Panc1 (cell line): ENCODE measurements at regions of chr10 and their contacts with region 1.

Region 1: DNA sequence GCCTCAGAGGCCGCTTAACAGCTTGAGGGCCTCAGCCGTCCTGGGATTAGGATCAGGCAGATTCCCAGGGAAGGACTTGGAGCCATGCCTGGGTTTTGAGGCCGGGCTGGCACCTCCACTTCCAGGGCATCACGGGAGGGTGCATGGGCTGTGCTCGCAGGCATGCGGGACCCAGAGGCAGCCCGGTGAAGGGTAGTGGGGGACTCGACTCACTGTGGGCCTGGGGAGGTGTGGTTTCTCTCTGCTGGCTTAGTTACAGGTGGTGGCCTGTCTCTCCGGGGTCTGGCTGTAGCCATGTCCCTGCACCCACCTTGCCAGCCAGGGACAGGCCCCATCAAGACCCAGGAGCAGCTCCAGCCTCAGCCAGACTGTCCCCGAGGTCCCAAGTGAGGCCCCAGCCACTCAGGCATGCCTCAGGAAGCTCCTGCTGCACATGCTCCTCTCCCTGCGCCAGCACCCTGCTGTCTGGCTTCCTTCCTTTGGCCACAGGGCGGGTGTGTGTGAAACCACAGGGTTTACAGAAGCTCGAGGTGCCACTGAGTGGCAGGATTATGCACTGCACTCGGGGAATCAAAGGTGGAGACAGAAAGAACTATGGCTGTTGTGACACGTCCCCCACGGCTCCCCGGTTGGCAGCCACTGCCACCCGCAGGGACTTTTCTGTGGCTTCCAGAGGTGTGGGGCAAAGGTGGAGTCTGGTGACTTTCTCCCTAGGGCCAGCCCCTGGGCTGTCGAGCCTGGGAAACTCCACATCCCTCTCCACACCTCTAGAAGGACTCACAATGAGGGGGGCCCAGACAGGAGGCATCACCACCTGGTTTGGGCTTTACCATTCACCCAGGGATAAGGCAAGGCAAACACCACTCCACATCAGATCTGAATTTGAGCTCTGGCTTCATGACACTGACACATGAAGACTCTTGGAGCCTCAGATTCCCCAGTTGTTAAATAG is 19.7 kb downstream of the GOLGA7B start:
- DNase-seq: peak; percentile 72
- ATAC-seq: peak; percentile 98
- H3K4me3 ChIP-seq: peak overlapping the region in 1 of 2 experiments; percentile 6; a peak in 1 of 4 replicates
- H3K27ac ChIP-seq: peak overlapping the region; percentile 39
- H3K4me1 ChIP-seq: peaks cover 15% of the 10 kb centered on the region
- H3K27me3 ChIP-seq: peaks cover 2% of the 10 kb centered on the region; the same call in 1 of the 2 replicates
- CTCF ChIP-seq: peak; percentile 90

Region 2: GRCh38 chr10:97714372-97715258 is 154.8 kb before region 1 on chr10:
- CTCF ChIA-PET with region 1: no interaction called
- POLR2A ChIA-PET with region 1: no interaction called
- in situ Hi-C with region 1: no loop called
- intact Hi-C with region 1: no loop called
- DNase-seq: no peak
- ATAC-seq: peak; percentile 67
- H3K4me3 ChIP-seq: peak overlapping the region; percentile 73 to 74
- H3K27ac ChIP-seq: peak overlapping the region; percentile 83
- H3K4me1 ChIP-seq: peaks cover 21% of the 10 kb centered on the region
- H3K27me3 ChIP-seq: no peaks in the 10 kb centered on the region
- CTCF ChIP-seq: no peak

Region 3: GRCh38 chr10:97792141-97792721 is 77.1 kb before region 1 on chr10:
- CTCF ChIA-PET with region 1: interaction called, 25 read pairs
- POLR2A ChIA-PET with region 1: no interaction called
- in situ Hi-C with region 1: no loop called
- intact Hi-C with region 1: loop called (anchors 1 kb)
- DNase-seq: peak; percentile 63
- ATAC-seq: peak; percentile 32
- H3K4me3 ChIP-seq: no peak overlapping the region
- H3K27ac ChIP-seq: no peak overlapping the region
- H3K4me1 ChIP-seq: no peaks in the 10 kb centered on the region
- H3K27me3 ChIP-seq: no peaks in the 10 kb centered on the region; the same call in 1 of the 2 replicates
- CTCF ChIP-seq: peak; percentile 99